Left cardiac atrium (tissue), 4 donors: ENCODE measurements at regions of chr12 and their contacts with region 1.

Region 1: GRCh38 chr12:10783252-10783651 is 19.2 kb downstream of the TAS2R7 start:
- DNase-seq: no peak
- ATAC-seq: no peak

Region 2: DNA sequence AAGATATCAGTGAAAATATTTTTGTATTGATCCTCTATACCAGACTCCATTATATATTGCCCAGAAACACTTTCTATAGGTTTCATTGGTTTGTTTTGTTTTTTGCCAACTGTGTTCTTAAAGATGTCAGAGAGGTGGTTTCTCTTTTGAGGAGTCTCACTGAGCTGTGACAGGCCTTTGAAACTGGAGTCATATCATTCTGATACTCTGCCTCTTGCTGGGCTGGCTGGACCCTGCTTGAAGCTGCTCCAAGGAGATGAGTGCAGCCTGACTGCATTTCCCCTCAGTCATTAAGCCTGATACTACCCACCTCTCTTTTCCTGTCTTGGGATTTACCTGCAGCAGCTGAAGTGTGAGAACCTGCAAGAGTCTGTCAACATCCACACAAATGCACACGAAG is 367.6 kb after region 1 on chr12:
- intact Hi-C with region 1: no loop called
- DNase-seq: no peak
- ATAC-seq: no peak

Region 3: GRCh38 chr12:11209108-11209507 is 425.9 kb after region 1 on chr12:
- intact Hi-C with region 1: loop called in 1 of 2 experiments (anchors 5 kb)
- DNase-seq: no peak
- ATAC-seq: no peak